PC-9 (cell line): ENCODE measurements at regions of chr12 and their contacts with region 1.

Region 1: DNA sequence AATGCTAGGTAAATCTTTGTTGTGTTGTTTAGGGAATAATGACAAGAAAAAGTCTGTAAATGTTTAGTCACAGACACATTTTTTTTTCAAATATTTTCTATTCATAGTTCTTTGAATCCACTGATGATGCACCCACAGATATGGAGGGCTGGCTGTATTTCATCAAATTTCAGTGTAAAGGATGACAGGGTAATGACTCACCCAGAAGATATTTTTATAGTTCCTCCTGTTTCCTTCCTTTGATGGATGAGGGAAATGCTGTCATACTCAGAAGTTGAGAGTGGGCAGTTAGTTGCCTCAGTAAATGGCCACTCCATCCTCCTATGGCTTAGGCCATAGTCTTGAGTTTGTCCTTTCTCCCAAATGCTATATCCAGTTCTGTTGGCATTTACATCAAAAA is 76.9 kb upstream of the REP15 start:
- DNase-seq: peak; percentile 34 to 86
- H3K4me3 ChIP-seq: no peak overlapping the region
- H3K27ac ChIP-seq: peak overlapping the region; percentile 55
- H3K4me1 ChIP-seq: peaks cover 25% of the 10 kb centered on the region
- H3K27me3 ChIP-seq: no peaks in the 10 kb centered on the region
- CTCF ChIP-seq: no peak

Region 2: GRCh38 chr12:27343255-27344000 is 275.9 kb before region 1 on chr12:
- CTCF ChIA-PET with region 1: no interaction called
- POLR2A ChIA-PET with region 1: no interaction called
- intact Hi-C with region 1: loop called (anchors 1 kb)
- DNase-seq: peak; percentile 57 to 96
- H3K4me3 ChIP-seq: peak overlapping the region; percentile 28; the same call in 1 of the 2 replicates
- H3K27ac ChIP-seq: peak overlapping the region; percentile 99
- H3K4me1 ChIP-seq: peaks cover 66% of the 10 kb centered on the region
- H3K27me3 ChIP-seq: no peaks in the 10 kb centered on the region
- CTCF ChIP-seq: no peak